ENCODE measurements at regions of chr1 and their contacts with region 1.

Region 1: GRCh38 chr1:7752512-7753417 is 18.3 kb upstream of the VAMP3 start:
- DNase-seq: peak; percentile 78
- H3K4me3 Mint-ChIP-seq: peak overlapping the region; percentile 22
- H3K27ac Mint-ChIP-seq: no peak overlapping the region
- H3K4me1 Mint-ChIP-seq: peaks cover 6% of the 10 kb centered on the region
- H3K27me3 Mint-ChIP-seq: peaks cover 14% of the 10 kb centered on the region

Region 2: GRCh38 chr1:7432102-7432899 is 320.5 kb before region 1 on chr1:
- intact Hi-C with region 1: no loop called
- DNase-seq: no peak
- H3K4me3 Mint-ChIP-seq: no peak overlapping the region
- H3K27ac Mint-ChIP-seq: no peak overlapping the region
- H3K4me1 Mint-ChIP-seq: no peaks in the 10 kb centered on the region
- H3K27me3 Mint-ChIP-seq: no peaks in the 10 kb centered on the region

Region 3: GRCh38 chr1:7680207-7680954 is 72.4 kb before region 1 on chr1:
- intact Hi-C with region 1: loop called (anchors 5 kb)
- DNase-seq: peak; percentile 75
- H3K4me3 Mint-ChIP-seq: peak overlapping the region; percentile 75
- H3K27ac Mint-ChIP-seq: no peak overlapping the region
- H3K4me1 Mint-ChIP-seq: no peaks in the 10 kb centered on the region
- H3K27me3 Mint-ChIP-seq: peaks cover 15% of the 10 kb centered on the region